ENCODE measurements at regions of chr17 and their contacts with region 1.

Region 1: GRCh38 chr17:40086150-40087044 is 14.0 kb downstream of the NR1D1 start:
- DNase-seq: peak; percentile 60
- ATAC-seq: peak; percentile 48
- H3K4me3 Mint-ChIP-seq: no peak overlapping the region
- H3K27ac Mint-ChIP-seq: no peak overlapping the region
- H3K4me1 Mint-ChIP-seq: no peaks in the 10 kb centered on the region
- H3K27me3 Mint-ChIP-seq: no peaks in the 10 kb centered on the region

Region 2: GRCh38 chr17:40005520-40005919 is 80.9 kb before region 1 on chr17:
- CTCF ChIA-PET with region 1: interaction called, 10 read pairs
- POLR2A ChIA-PET with region 1: interaction called, 3 read pairs
- DNase-seq: no peak
- ATAC-seq: no peak
- H3K4me3 Mint-ChIP-seq: no peak overlapping the region
- H3K27ac Mint-ChIP-seq: no peak overlapping the region
- H3K4me1 Mint-ChIP-seq: peaks cover 8% of the 10 kb centered on the region
- H3K27me3 Mint-ChIP-seq: peaks cover 3% of the 10 kb centered on the region

Region 3: GRCh38 chr17:40026816-40027613 is 59.4 kb before region 1 on chr17:
- CTCF ChIA-PET with region 1: interaction called, 14 read pairs
- POLR2A ChIA-PET with region 1: no interaction called
- DNase-seq: peak; percentile 85
- ATAC-seq: peak; percentile 91
- H3K4me3 Mint-ChIP-seq: no peak overlapping the region
- H3K27ac Mint-ChIP-seq: no peak overlapping the region
- H3K4me1 Mint-ChIP-seq: peaks cover 23% of the 10 kb centered on the region
- H3K27me3 Mint-ChIP-seq: no peaks in the 10 kb centered on the region

Region 4: DNA sequence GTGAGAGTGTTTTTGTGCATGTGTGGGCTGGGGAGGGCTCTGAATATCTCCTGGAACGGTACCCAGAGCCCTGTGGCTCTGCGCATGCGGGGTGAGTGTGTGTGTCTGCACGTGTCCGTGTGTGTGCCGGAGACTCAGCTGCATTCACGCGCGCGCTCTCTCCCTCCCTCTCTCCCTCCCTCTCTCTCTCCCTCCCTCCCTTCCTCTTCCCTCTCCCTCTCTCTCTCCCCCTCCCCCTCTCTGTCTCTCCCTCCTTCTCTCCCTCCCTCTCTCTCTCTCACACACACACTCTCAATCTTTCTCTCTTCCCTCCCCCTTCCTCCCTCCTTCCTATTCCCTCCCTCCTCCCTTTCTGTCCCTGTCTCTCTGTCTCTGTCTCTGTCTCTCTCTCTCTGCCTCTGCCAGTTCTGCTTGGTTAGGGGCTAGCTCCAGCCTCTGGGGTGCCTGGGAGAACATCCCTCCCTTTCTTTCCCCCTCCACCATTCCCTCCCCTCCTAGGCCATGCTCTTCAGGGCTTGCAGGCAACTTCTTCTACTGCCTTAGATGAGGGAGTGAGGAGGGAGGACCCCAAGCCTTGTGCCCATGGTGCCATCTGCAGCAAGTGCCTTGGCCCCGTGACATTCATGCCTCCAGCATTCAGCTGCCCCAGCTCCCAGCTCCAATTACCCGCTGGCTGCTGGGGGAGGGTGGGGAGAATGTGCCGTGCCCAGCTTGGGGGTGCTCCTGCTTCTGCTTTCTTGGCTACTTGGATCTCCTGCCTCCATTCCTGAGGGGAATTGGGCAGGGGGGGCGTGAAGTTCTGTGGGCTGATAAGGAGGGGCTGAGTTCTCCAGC is 17.3 kb before region 1 on chr17:
- CTCF ChIA-PET with region 1: interaction called, 75 read pairs
- POLR2A ChIA-PET with region 1: interaction called, 5 read pairs
- DNase-seq: peak; percentile 82
- ATAC-seq: peak; percentile 74
- H3K4me3 Mint-ChIP-seq: peak overlapping the region; percentile 77
- H3K27ac Mint-ChIP-seq: peak overlapping the region; percentile 90
- H3K4me1 Mint-ChIP-seq: peaks cover 47% of the 10 kb centered on the region
- H3K27me3 Mint-ChIP-seq: peaks cover 5% of the 10 kb centered on the region

Region 5: GRCh38 chr17:40098846-40099618 is 12.6 kb after region 1 on chr17:
- CTCF ChIA-PET with region 1: interaction called, 15 read pairs
- POLR2A ChIA-PET with region 1: no interaction called
- DNase-seq: peak; percentile 97
- ATAC-seq: peak; percentile 62
- H3K4me3 Mint-ChIP-seq: peak overlapping the region; percentile 82
- H3K27ac Mint-ChIP-seq: peak overlapping the region; percentile 78
- H3K4me1 Mint-ChIP-seq: peaks cover 91% of the 10 kb centered on the region
- H3K27me3 Mint-ChIP-seq: no peaks in the 10 kb centered on the region